H1 (cell line): ENCODE measurements at regions of chr15 and their contacts with region 1.

Region 1: DNA sequence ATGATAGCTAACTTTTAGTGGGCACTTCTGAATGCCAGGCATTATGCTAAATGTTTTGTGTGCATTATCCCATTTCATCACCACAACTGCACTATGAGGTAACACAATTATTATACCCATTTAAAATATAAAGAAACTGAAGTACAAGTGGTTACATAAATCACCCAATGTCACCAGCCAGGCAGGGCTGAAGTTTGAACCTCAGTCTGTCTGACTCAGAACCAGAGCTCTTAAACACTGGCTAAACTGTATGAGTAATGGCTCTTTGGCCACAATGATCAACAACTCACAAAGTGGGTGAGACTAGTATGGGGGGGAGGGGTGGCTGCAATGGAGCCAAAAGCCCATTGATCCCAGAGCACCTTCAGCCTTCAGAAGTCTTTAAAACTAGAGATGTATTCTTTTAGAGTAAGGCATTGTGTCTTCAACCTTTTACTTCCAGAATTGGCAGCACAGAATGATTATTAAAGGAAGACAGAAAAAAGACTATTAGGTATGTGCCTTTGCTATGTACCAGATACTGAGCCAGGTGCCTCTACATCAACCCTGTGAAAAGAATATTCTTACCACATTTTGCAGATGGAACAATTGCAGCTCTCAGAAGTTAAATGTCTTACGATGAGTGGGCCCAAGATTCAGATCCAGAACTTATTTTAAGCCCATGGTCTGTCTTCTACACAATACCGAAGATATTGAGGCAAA is 166.9 kb downstream of the UACA start:
- DNase-seq: no peak
- H3K4me3 ChIP-seq: no peak overlapping the region
- H3K27ac ChIP-seq: no peak overlapping the region
- H3K4me1 ChIP-seq: no peaks in the 10 kb centered on the region
- H3K27me3 ChIP-seq: no peaks in the 10 kb centered on the region
- CTCF ChIP-seq: no peak
- EP300 ChIP-seq: no peak
- POLR2A ChIP-seq: no peak
- RAD21 ChIP-seq: no peak

Region 2: DNA sequence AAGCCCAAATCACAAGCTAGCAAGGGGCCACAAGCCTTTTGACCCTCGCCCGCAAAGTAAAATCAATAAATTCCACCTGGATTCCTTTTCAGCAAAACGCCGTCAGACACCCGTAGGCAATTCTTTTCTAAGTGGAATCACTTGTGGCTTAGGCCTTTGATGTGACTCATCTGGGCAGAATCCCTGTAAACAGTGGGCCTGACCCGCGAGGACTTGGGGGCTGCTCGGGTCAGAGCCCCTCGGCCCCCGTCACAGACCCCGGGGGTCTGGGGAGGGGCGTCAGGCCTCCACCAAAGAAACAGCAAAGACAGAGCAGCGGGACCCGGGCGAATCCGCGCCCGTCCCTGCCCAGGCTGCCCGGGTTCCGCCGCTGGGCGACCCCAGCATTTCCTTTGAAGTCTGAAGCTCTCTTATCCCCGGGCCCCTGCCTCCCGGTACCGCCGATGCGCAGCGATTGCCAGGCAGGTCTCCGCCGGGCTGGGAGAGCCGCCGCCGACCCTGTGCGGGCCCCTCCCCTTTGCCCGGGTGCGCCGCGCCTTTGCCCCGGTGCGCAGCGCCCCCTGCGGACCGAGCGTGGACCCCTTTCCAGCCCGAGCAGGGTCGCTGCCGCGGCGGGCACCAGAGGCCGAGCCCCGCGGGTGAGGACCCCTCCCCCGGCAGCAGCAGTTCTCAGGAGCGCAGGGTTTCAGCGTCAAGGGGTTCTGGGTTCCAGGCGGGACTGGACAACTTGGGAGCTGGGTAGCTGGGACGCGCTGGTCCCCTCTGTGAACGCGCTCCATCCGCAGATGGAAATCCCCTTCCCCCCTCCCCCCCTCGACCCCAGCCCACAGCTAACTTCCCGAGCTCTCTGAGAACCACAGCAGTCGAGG is 11.4 kb before region 1 on chr15:
- CTCF ChIA-PET with region 1: interaction called, 12 read pairs
- POLR2A ChIA-PET with region 1: no interaction called
- DNase-seq: peak; percentile 41 to 91
- H3K4me3 ChIP-seq: peak overlapping the region; percentile 17 to 63 (median 36)
- H3K27ac ChIP-seq: no peak overlapping the region
- H3K4me1 ChIP-seq: peaks cover 0 to 4% (median 3%) of the 10 kb centered on the region in 4 experiments; a peak in 3 of 7 replicates
- H3K27me3 ChIP-seq: peaks cover 0 to 10% (median 8%) of the 10 kb centered on the region in 4 experiments; a peak in 5 of 7 replicates
- CTCF ChIP-seq: peak; percentile 72 to 85 (median 72)
- EP300 ChIP-seq: no peak
- POLR2A ChIP-seq: no peak
- RAD21 ChIP-seq: peak; percentile 67 to 83